ENCODE measurements at regions of chr5 and their contacts with region 1.

Region 1: GRCh38 chr5:159156426-159157238 is 52.7 kb downstream of the RNF145 start:
- DNase-seq: peak; percentile 57 to 73 (median 70)
- H3K4me3 ChIP-seq: no peak overlapping the region
- H3K4me3 Mint-ChIP-seq: peak overlapping the region in 3 of 8 donors; percentile 2 to 38 (median 34)
- H3K27ac ChIP-seq: no peak overlapping the region
- H3K27ac Mint-ChIP-seq: peak overlapping the region; percentile 64 to 91 (median 84)
- H3K4me1 ChIP-seq: peaks cover 14% of the 10 kb centered on the region
- H3K4me1 Mint-ChIP-seq: peaks cover 9 to 22% (median 14%) of the 10 kb centered on the region in 4 donors
- H3K27me3 ChIP-seq: no peaks in the 10 kb centered on the region
- H3K27me3 Mint-ChIP-seq: no peaks in the 10 kb centered on the region

Region 2: GRCh38 chr5:158676642-158677469 is 479.8 kb before region 1 on chr5:
- CTCF ChIA-PET with region 1: no interaction called
- POLR2A ChIA-PET with region 1: no interaction called
- intact Hi-C with region 1: no loop called
- DNase-seq: no peak
- H3K4me3 ChIP-seq: no peak overlapping the region
- H3K4me3 Mint-ChIP-seq: peak overlapping the region in 3 of 8 donors; percentile 21 to 55 (median 37)
- H3K27ac ChIP-seq: no peak overlapping the region
- H3K27ac Mint-ChIP-seq: peak overlapping the region in 1 of 7 donors; percentile 32
- H3K4me1 ChIP-seq: no peaks in the 10 kb centered on the region
- H3K4me1 Mint-ChIP-seq: peaks cover 0 to 12% (median 0%) of the 10 kb centered on the region in 4 donors
- H3K27me3 ChIP-seq: no peaks in the 10 kb centered on the region
- H3K27me3 Mint-ChIP-seq: peaks cover 13 to 23% of the 10 kb centered on the region in 2 donors

Region 3: DNA sequence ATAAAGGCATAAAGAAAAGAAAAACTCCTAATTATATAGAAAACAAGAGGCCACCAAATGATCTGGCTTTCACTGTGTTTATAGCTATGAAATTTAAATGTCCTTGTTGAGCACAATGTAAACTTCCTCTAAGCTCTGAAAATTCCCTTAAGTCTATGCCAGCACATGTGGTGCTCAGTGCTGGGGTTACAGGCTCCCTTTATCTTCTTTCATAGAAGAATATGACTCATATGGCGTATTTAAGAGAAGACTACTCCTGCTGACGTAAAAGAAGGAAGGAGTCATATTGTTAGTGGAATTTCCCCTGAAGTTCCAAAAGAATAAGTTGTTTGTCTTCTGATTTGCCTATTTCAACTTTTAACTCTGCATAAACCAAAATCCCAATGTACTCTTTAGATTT is 22.3 kb after region 1 on chr5:
- CTCF ChIA-PET with region 1: interaction called, 13 read pairs
- POLR2A ChIA-PET with region 1: interaction called, 3 read pairs
- intact Hi-C with region 1: no loop called
- DNase-seq: peak in 2 of 5 donors; percentile 6 to 58
- H3K4me3 ChIP-seq: no peak overlapping the region
- H3K4me3 Mint-ChIP-seq: peak overlapping the region in 1 of 8 donors; percentile 1
- H3K27ac ChIP-seq: no peak overlapping the region
- H3K27ac Mint-ChIP-seq: peak overlapping the region; percentile 37 to 90 (median 81)
- H3K4me1 ChIP-seq: peaks cover 82% of the 10 kb centered on the region
- H3K4me1 Mint-ChIP-seq: peaks cover 45 to 88% (median 63%) of the 10 kb centered on the region in 4 donors
- H3K27me3 ChIP-seq: no peaks in the 10 kb centered on the region
- H3K27me3 Mint-ChIP-seq: no peaks in the 10 kb centered on the region

Region 4: DNA sequence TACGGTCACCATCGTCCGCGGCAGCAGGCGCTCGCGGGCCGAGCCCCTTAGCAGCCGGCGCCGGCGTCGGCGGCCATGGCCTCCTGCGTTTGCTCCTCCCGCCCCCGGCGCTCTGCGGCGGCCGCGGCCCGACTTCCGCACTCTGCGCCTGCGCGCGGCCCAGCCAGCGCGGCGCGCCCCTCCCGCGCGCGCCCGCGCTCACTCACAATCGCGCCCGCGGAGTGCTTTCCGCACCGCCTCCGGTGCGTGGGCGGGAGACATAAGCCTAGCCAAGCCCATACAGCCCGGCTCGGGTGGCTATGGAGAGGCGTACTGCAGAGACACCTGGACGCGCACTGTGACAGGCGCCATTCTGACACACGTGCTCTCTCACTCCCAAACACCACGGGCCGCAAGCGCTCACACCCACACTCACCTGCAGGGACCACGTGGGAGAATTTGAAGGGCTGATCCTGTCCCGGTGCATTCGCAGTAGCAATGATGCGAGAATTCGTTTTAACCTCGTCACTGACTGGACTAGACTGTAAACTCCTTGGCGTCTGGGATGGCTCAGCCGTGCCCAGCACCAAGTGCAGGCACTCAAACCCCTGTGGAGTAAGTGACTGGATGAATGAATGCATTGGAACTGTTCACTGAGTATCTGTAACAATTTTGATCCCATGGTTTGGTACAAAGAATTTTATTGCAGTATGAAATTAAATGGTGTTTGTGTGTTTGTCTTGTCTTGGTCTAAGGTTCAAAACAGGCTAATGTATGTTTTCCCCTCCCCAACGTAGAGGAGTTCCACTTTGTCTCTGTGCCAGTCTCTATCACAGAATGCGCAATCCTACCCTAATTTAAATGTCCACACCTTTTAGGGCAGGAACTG is 53.0 kb after region 1 on chr5 and contains the start of gene RNF145:
- CTCF ChIA-PET with region 1: interaction called, 45 read pairs
- POLR2A ChIA-PET with region 1: interaction called, 16 read pairs
- intact Hi-C with region 1: loop called (anchors 1 kb)
- DNase-seq: peak; percentile 93 to 96 (median 94)
- H3K4me3 ChIP-seq: peak within 1 kb of the TSS; percentile 82 to 85
- H3K4me3 Mint-ChIP-seq: peak within 1 kb of the TSS; percentile 93 to 99 (median 96)
- H3K27ac ChIP-seq: peak within 1 kb of the TSS; percentile 87
- H3K27ac Mint-ChIP-seq: peak within 1 kb of the TSS; percentile 96 to 100 (median 98)
- H3K4me1 ChIP-seq: peaks cover 33% of the 10 kb centered on the region
- H3K4me1 Mint-ChIP-seq: peaks cover 32 to 55% (median 38%) of the 10 kb centered on the region in 4 donors
- H3K27me3 ChIP-seq: no peaks in the 10 kb centered on the region
- H3K27me3 Mint-ChIP-seq: peaks cover 0 to 1% of the 10 kb centered on the region in 2 donors
- total RNA-seq, gene RNF145: 62.4 to 67.8 TPM

Region 5: GRCh38 chr5:159262859-159263567 is 106.4 kb after region 1 on chr5 and contains the start of gene UBLCP1:
- CTCF ChIA-PET with region 1: interaction called, 7 read pairs
- POLR2A ChIA-PET with region 1: interaction called, 3 read pairs
- intact Hi-C with region 1: loop called (anchors 1 kb)
- DNase-seq: peak; percentile 82 to 87 (median 86)
- H3K4me3 ChIP-seq: peak within 1 kb of the TSS; percentile 67 to 75
- H3K4me3 Mint-ChIP-seq: peak within 1 kb of the TSS; percentile 98 to 99 (median 98)
- H3K27ac ChIP-seq: peak within 1 kb of the TSS; percentile 89
- H3K27ac Mint-ChIP-seq: peak within 1 kb of the TSS; percentile 96 to 100 (median 99)
- H3K4me1 ChIP-seq: peaks cover 27% of the 10 kb centered on the region
- H3K4me1 Mint-ChIP-seq: peaks cover 34 to 66% (median 46%) of the 10 kb centered on the region in 4 donors
- H3K27me3 ChIP-seq: no peaks in the 10 kb centered on the region
- H3K27me3 Mint-ChIP-seq: no peaks in the 10 kb centered on the region
- total RNA-seq, gene UBLCP1: 31.6 to 33.4 TPM

Region 6: GRCh38 chr5:159310511-159310910 is 153.9 kb after region 1 on chr5:
- CTCF ChIA-PET with region 1: interaction called, 175 read pairs
- POLR2A ChIA-PET with region 1: no interaction called
- intact Hi-C with region 1: no loop called
- DNase-seq: peak in 2 of 5 donors; percentile 10 to 22
- H3K4me3 ChIP-seq: peak overlapping the region in 1 of 2 donors; percentile 29
- H3K4me3 Mint-ChIP-seq: peak overlapping the region in 5 of 8 donors; percentile 4 to 67 (median 35)
- H3K27ac ChIP-seq: no peak overlapping the region
- H3K27ac Mint-ChIP-seq: no peak overlapping the region
- H3K4me1 ChIP-seq: peaks cover 4% of the 10 kb centered on the region
- H3K4me1 Mint-ChIP-seq: peaks cover 0 to 4% (median 3%) of the 10 kb centered on the region in 4 donors
- H3K27me3 ChIP-seq: no peaks in the 10 kb centered on the region
- H3K27me3 Mint-ChIP-seq: peaks cover 2 to 16% of the 10 kb centered on the region in 2 donors

Region 7: DNA sequence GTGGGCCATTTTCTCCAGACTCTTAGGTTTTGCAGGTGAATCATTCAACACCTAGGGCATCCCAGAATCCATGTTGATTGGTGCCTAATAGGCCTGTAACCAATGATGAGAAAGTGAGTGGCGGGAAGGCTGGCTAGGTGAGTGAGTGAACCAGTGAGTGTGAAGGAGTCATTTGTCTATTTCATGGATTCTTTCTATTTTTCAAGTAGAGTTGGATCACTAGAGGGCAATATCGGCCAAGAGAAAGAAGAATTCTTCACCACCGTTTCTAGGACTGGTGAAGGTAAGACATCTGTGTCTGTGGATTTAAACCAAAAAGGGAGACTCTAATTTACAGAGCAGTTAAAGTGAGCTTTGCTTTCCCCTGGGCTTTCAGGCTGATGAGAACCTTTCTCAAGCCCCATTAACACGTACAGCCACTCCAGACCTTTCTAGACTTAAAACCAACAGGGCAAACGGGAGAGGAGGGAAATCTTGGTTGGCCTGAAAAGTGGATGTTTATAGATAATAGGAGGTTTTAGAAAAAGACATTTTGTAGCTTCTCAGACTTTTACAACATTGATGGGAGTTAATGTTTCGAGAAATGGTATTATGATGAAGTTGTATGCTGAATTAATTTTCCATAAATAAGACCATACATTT is 287.9 kb after region 1 on chr5:
- CTCF ChIA-PET with region 1: interaction called, 3 read pairs
- POLR2A ChIA-PET with region 1: no interaction called
- intact Hi-C with region 1: loop called (anchors 5 kb)
- DNase-seq: peak in 4 of 5 donors; percentile 26 to 49 (median 32)
- H3K4me3 ChIP-seq: no peak overlapping the region
- H3K4me3 Mint-ChIP-seq: no peak overlapping the region
- H3K27ac ChIP-seq: no peak overlapping the region
- H3K27ac Mint-ChIP-seq: peak overlapping the region in 1 of 7 donors; percentile 35
- H3K4me1 ChIP-seq: no peaks in the 10 kb centered on the region
- H3K4me1 Mint-ChIP-seq: peaks cover 0 to 6% (median 5%) of the 10 kb centered on the region in 4 donors
- H3K27me3 ChIP-seq: no peaks in the 10 kb centered on the region
- H3K27me3 Mint-ChIP-seq: no peaks in the 10 kb centered on the region

Region 8: GRCh38 chr5:159987031-159987674 is 830.5 kb after region 1 on chr5:
- CTCF ChIA-PET with region 1: interaction called, 72 read pairs
- POLR2A ChIA-PET with region 1: interaction called, 6 read pairs
- intact Hi-C with region 1: loop called (anchors 1 kb)
- DNase-seq: peak; percentile 67 to 76 (median 72)
- H3K4me3 ChIP-seq: peak overlapping the region in 1 of 2 donors; percentile 44
- H3K4me3 Mint-ChIP-seq: peak overlapping the region; percentile 52 to 79 (median 72)
- H3K27ac ChIP-seq: no peak overlapping the region
- H3K27ac Mint-ChIP-seq: peak overlapping the region in 4 of 7 donors; percentile 25 to 66 (median 45)
- H3K4me1 ChIP-seq: no peaks in the 10 kb centered on the region
- H3K4me1 Mint-ChIP-seq: peaks cover 0 to 3% (median 0%) of the 10 kb centered on the region in 4 donors
- H3K27me3 ChIP-seq: no peaks in the 10 kb centered on the region
- H3K27me3 Mint-ChIP-seq: peaks cover 14 to 15% of the 10 kb centered on the region in 2 donors

Region 9: DNA sequence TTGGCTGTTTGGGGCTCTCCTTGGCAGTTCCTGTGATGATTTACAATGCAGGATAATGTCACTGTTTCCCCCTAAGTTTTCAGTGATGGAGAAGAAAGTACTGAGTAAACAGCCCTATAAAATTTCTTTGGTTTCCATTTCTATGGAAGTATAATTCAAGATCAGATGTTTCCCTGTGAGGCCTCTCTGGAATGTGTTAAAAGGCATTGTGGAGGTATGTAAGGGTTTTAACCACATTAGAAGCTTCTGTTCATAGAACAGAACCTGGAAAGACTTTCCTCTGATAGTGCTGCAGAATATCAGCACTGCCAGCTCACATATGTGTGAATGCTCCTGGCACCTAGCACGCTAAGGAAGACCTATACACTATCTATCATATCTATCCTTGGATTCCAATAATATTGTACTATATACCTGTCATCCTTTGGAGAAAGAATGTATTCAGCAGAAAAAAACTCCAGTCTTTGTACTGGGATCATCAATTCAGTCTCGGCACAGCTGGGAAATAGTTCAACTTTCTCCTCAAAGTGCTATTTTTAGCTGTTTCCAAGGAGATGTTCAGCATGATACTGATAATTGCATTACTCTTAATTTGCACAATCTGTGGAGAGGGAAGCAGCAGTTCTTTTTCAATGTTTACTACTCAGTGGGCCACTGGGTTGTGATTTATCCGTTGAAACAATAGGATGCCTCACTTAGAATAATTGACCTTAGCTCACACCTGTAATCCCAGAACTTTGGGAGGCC is 874.2 kb after region 1 on chr5:
- CTCF ChIA-PET with region 1: no interaction called
- POLR2A ChIA-PET with region 1: no interaction called
- intact Hi-C with region 1: no loop called
- DNase-seq: no peak
- H3K4me3 ChIP-seq: no peak overlapping the region
- H3K4me3 Mint-ChIP-seq: no peak overlapping the region
- H3K27ac ChIP-seq: no peak overlapping the region
- H3K27ac Mint-ChIP-seq: peak overlapping the region in 1 of 7 donors; percentile 24
- H3K4me1 ChIP-seq: no peaks in the 10 kb centered on the region
- H3K4me1 Mint-ChIP-seq: peaks cover 7 to 26% (median 16%) of the 10 kb centered on the region in 4 donors
- H3K27me3 ChIP-seq: no peaks in the 10 kb centered on the region
- H3K27me3 Mint-ChIP-seq: no peaks in the 10 kb centered on the region